ENCODE measurements at regions of chr6 and their contacts with region 1.

Region 1: DNA sequence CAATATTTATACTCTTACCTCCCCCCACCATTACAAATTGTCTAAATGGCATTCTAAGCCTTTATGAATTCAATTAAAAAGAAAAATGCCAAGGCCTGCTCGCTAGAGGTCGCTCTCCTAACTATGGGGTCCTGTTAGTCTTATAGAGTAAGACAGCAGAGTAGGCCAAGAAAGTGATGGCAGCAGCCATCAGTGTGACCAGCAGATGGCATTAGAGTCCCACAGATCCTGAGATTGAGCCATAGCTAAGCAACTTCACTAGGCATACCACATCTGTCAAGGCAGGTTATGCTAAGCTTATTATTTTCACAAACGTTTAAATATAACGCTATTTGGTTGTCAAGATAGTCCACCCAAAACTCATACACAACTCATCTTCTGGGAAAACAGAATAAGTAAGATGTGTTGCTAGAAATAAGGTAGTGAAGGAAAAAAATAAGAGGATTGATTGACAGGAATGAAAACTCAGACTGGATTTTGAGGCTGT is 57.6 kb upstream of the SCAF8 start:
- DNase-seq: peak; percentile 91
- H3K4me3 ChIP-seq: no peak overlapping the region
- H3K27ac ChIP-seq: no peak overlapping the region
- H3K4me1 ChIP-seq: no peaks in the 10 kb centered on the region
- H3K27me3 ChIP-seq: no peaks in the 10 kb centered on the region
- CTCF ChIP-seq: peak; percentile 97 to 99 (median 98)
- EP300 ChIP-seq: no peak
- POLR2A ChIP-seq: no peak

Region 2: GRCh38 chr6:154733012-154733625 is 57.5 kb after region 1 on chr6 and contains the start of gene SCAF8:
- in situ Hi-C with region 1: no loop called
- intact Hi-C with region 1: loop called (anchors 5 kb)
- DNase-seq: peak; percentile 85
- H3K4me3 ChIP-seq: peak within 1 kb of the TSS; percentile 75 to 91 (median 82)
- H3K27ac ChIP-seq: peak within 1 kb of the TSS; percentile 98 to 99 (median 98)
- H3K4me1 ChIP-seq: peaks cover 21 to 48% (median 34%) of the 10 kb centered on the region in 4 donors
- H3K27me3 ChIP-seq: no peaks in the 10 kb centered on the region
- CTCF ChIP-seq: peak; percentile 48 to 88 (median 74)
- EP300 ChIP-seq: no peak
- POLR2A ChIP-seq: peak; percentile 55
- total RNA-seq, gene SCAF8: 32.2 to 38.6 (median 33.4) TPM

Region 3: DNA sequence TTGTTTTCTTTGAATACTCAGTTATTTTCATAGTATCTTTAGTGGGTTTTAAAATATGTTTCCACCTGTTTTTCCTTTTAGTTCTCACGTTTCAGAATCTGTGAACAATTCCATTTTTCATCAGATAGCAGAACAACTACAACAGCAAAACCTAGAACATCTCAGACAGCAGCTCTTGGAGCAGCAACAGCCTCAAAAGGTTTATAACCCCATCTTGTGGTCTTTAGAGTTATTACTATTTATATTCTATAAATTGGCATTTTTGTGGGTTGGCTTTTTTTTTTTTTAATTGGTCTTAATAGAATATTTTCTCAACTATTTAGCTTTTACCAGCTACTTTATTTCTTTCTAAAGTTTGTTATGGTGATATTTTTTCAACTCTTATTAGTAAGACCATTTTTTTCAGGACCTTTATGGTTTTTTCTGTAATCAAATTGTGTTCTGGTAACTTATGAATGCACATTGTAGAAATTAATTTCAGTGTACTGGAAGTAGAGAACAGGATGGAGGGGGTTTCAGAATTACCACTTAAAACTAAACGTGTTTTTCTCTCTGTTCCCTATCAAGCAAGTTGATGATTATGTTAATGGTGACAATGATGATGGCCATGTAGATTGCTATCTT is 129.8 kb after region 1 on chr6:
- in situ Hi-C with region 1: loop called (anchors 10 kb)
- intact Hi-C with region 1: loop called (anchors 10 kb)
- DNase-seq: no peak
- H3K4me3 ChIP-seq: no peak overlapping the region
- H3K27ac ChIP-seq: no peak overlapping the region
- H3K4me1 ChIP-seq: peaks cover 0 to 4% (median 0%) of the 10 kb centered on the region in 4 donors
- H3K27me3 ChIP-seq: no peaks in the 10 kb centered on the region
- CTCF ChIP-seq: peak; percentile 21 to 41 (median 32)
- EP300 ChIP-seq: no peak
- POLR2A ChIP-seq: no peak

Region 4: GRCh38 chr6:154814063-154814462 is 138.4 kb after region 1 on chr6:
- in situ Hi-C with region 1: loop called (anchors 10 kb)
- intact Hi-C with region 1: loop called (anchors 10 kb)
- DNase-seq: no peak
- H3K4me3 ChIP-seq: no peak overlapping the region
- H3K27ac ChIP-seq: no peak overlapping the region
- H3K4me1 ChIP-seq: no peaks in the 10 kb centered on the region
- H3K27me3 ChIP-seq: no peaks in the 10 kb centered on the region
- CTCF ChIP-seq: no peak
- EP300 ChIP-seq: no peak
- POLR2A ChIP-seq: no peak